ENCODE measurements at regions of chr11 and their contacts with region 1.

Region 1: DNA sequence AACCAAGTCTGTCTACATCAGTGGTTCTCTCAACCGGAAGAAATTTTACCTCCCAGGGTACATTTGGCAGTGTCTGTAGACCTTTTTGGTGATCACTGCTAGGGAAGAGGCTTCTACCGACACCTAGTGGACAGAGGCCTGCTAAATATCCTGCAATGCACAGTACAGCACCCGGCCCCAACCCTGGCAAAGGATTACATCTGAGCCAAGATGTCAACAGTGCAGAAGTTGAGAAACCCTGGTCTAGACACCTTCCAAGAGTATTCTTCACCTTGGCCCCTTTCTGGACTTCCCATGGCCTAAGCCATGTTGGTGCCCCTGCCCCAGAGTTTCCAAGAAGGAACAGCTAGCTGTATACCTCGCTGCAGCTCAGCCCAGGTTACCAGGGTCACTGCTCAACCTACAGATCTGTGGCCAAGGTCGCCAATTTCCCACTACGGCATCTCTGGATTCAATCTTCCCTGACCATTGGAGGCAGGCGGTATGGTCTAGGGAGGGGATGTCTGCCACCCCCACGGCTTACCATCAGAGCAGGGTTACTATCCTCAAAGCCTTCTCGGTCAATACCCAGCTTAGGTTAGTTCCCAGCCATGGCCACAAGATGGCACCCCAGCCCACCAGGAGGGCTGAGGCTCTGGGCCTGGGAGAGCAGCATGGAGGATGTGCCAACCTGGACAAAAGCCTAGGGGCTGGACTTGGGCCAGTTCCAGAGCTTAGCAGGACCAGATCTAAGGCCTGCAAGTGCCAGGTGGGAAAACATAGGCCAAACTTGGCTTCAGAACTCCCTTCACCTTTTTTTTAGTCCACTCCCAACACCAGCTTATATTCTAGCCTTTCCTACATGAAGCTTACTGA is 3.7 kb upstream of the KCNC1 start:
- DNase-seq: peak; percentile 76
- H3K4me3 Mint-ChIP-seq: no peak overlapping the region
- H3K27ac Mint-ChIP-seq: no peak overlapping the region
- H3K4me1 Mint-ChIP-seq: peaks cover 7% of the 10 kb centered on the region
- H3K27me3 Mint-ChIP-seq: peaks cover 47% of the 10 kb centered on the region

Region 2: GRCh38 chr11:17598700-17599459 is 132.0 kb before region 1 on chr11:
- CTCF ChIA-PET with region 1: interaction called, 18 read pairs
- DNase-seq: peak; percentile 80
- H3K4me3 Mint-ChIP-seq: no peak overlapping the region
- H3K27ac Mint-ChIP-seq: no peak overlapping the region
- H3K4me1 Mint-ChIP-seq: no peaks in the 10 kb centered on the region
- H3K27me3 Mint-ChIP-seq: peaks cover 35% of the 10 kb centered on the region

Region 3: GRCh38 chr11:17932472-17932871 is 201.6 kb after region 1 on chr11:
- CTCF ChIA-PET with region 1: no interaction called
- DNase-seq: no peak
- H3K4me3 Mint-ChIP-seq: no peak overlapping the region
- H3K27ac Mint-ChIP-seq: no peak overlapping the region
- H3K4me1 Mint-ChIP-seq: no peaks in the 10 kb centered on the region
- H3K27me3 Mint-ChIP-seq: no peaks in the 10 kb centered on the region

Region 4: DNA sequence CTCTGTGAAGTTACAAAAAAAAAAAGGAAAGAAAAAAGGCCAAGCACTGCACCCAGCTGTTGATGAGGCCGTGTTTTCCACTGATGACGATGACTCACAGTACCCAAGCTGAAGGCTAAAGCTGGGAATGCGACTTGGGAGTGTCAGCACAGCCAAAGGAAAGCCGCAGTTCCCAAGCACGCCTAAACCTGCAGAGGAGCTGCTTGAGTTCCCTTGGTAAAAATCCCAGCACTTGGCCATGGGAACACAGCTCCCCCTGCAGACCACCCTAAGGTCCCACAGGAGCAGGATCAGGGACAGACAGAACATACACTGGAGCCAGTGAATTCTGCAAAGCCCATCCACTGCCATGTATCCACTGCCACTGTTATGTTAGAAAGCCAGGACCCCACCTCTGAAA is 242.2 kb after region 1 on chr11:
- CTCF ChIA-PET with region 1: interaction called, 84 read pairs
- DNase-seq: peak; percentile 25
- H3K4me3 Mint-ChIP-seq: no peak overlapping the region
- H3K27ac Mint-ChIP-seq: no peak overlapping the region
- H3K4me1 Mint-ChIP-seq: no peaks in the 10 kb centered on the region
- H3K27me3 Mint-ChIP-seq: no peaks in the 10 kb centered on the region